ENCODE measurements at regions of chr9 and their contacts with region 1.

Region 1: GRCh38 chr9:137029058-137029936 is 1.3 kb upstream of the ABCA2 start:
- DNase-seq: peak; percentile 49 to 83 (median 70)
- ATAC-seq: peak; percentile 33
- H3K4me3 ChIP-seq: peak overlapping the region; percentile 69 to 70
- H3K4me3 Mint-ChIP-seq: peak overlapping the region; percentile 82
- H3K27ac ChIP-seq: peak overlapping the region; percentile 37 to 70
- H3K27ac Mint-ChIP-seq: peak overlapping the region; percentile 82
- H3K4me1 ChIP-seq: peaks cover 74% of the 10 kb centered on the region
- H3K4me1 Mint-ChIP-seq: peaks cover 45% of the 10 kb centered on the region
- H3K27me3 ChIP-seq: no peaks in the 10 kb centered on the region
- H3K27me3 Mint-ChIP-seq: no peaks in the 10 kb centered on the region
- CTCF ChIP-seq: peak; percentile 61

Region 2: GRCh38 chr9:136944519-136945279 is 84.6 kb before region 1 on chr9 and contains the starts of genes C8G and FBXW5:
- CTCF ChIA-PET with region 1: interaction called, 68 read pairs
- POLR2A ChIA-PET with region 1: interaction called, 5 read pairs
- intact Hi-C with region 1: loop called in 1 of 2 experiments (anchors 1 kb)
- DNase-seq: peak; percentile 87 to 98 (median 93)
- ATAC-seq: peak; percentile 87
- H3K4me3 ChIP-seq: peak within 1 kb of the TSS; percentile 63 to 79
- H3K4me3 Mint-ChIP-seq: peak within 1 kb of the TSS; percentile 82
- H3K27ac ChIP-seq: peak within 1 kb of the TSS; percentile 28 to 48
- H3K27ac Mint-ChIP-seq: peak within 1 kb of the TSS; percentile 62
- H3K4me1 ChIP-seq: peaks cover 16% of the 10 kb centered on the region
- H3K4me1 Mint-ChIP-seq: peaks cover 12% of the 10 kb centered on the region
- H3K27me3 ChIP-seq: no peaks in the 10 kb centered on the region
- H3K27me3 Mint-ChIP-seq: no peaks in the 10 kb centered on the region
- CTCF ChIP-seq: peak; percentile 96
- total RNA-seq, gene C8G: not detected
- total RNA-seq, gene FBXW5: 38.4 to 39.5 TPM

Region 3: DNA sequence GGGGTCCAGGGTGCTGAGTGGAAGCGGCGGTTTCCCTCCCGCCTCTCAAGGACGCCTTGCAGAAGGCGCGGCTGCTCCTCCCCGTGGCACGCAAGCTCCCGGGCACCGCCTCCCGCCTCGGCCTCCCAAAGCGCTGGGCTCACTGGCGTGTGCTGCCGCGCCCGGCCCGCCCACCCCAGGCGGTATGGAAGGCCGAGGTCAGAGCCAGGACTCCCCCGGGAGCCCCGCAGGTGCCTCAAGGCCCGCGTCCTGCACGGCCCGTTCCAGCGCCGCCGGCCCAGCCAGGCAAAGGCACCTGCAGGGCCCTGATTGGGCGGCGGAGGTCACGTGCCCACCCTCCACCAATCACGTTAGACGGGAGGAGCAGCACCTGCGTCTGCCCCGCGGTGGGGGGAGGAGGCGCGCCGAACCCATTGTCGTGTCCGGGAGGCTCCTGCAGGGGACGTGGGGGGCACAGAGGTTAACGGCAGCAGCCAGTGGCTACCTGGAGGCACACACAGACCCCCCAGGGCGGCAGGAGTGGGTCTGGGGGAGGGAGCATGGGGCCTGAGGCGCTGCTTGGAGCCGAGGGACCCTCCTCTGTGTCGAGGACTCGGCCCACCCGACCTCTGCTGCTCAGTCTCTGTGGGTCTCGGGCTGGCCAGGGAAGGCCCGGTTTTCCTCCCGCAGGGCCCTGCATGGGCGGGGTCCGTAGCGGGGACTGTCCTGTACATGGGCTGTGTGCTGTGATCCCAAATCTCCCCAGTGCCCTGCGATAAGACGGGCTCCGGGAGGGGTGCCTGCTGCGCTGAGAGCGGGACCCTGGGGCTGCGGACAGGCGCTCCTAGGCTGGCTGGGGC is 79.3 kb before region 1 on chr9:
- CTCF ChIA-PET with region 1: interaction called, 68 read pairs
- POLR2A ChIA-PET with region 1: interaction called, 5 read pairs
- intact Hi-C with region 1: loop called in 1 of 2 experiments (anchors 1 kb)
- DNase-seq: peak; percentile 93 to 98 (median 97)
- ATAC-seq: peak; percentile 96
- H3K4me3 ChIP-seq: peak overlapping the region; percentile 68 to 70
- H3K4me3 Mint-ChIP-seq: peak overlapping the region; percentile 85
- H3K27ac ChIP-seq: peak overlapping the region; percentile 65 to 75
- H3K27ac Mint-ChIP-seq: peak overlapping the region; percentile 90
- H3K4me1 ChIP-seq: peaks cover 11% of the 10 kb centered on the region
- H3K4me1 Mint-ChIP-seq: peaks cover 14% of the 10 kb centered on the region
- H3K27me3 ChIP-seq: no peaks in the 10 kb centered on the region
- H3K27me3 Mint-ChIP-seq: no peaks in the 10 kb centered on the region
- CTCF ChIP-seq: peak; percentile 51

Region 4: DNA sequence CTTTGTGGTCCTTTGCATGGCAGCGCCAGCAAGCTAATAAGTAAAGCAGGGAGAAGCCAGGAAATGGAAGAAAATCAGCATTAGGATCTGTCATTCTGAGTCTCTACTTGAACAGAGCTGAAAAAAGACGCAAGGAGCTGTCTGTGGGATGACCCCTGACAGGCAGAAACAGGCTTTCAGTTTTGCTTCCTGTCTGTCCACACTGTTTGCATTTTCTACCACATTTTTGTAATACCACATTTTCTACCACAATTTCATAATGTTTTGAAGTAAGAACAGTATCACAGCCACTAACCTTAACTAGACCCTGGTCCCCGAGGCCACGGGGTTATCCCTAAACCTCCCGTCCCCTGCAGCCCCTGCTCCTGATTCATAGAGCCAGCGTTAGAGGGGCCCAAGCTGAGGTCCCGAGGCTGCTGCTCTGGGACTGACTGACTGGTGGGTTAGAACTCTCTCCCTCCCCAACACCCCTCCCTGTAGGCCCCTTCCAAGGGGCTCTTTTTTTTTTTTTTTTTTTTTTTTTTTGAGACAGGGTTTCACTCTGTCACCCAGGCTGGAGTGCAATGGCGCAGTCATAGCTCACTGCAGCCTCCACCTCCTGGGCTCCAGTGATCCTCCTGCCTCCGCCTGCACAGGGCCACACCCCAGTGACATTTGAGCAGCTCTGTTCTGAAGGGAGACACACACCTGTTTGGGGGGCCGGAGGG is 29.0 kb before region 1 on chr9:
- CTCF ChIA-PET with region 1: interaction called, 30 read pairs
- POLR2A ChIA-PET with region 1: interaction called, 6 read pairs
- intact Hi-C with region 1: loop called in 1 of 2 experiments (anchors 2 kb)
- DNase-seq: peak in 2 of 9 experiments; percentile 65 to 80
- ATAC-seq: peak; percentile 32
- H3K4me3 ChIP-seq: peak overlapping the region in 1 of 2 experiments; percentile 18
- H3K4me3 Mint-ChIP-seq: peak overlapping the region; percentile 69
- H3K27ac ChIP-seq: peak overlapping the region; percentile 9 to 65
- H3K27ac Mint-ChIP-seq: peak overlapping the region; percentile 69
- H3K4me1 ChIP-seq: peaks cover 40% of the 10 kb centered on the region
- H3K4me1 Mint-ChIP-seq: peaks cover 39% of the 10 kb centered on the region
- H3K27me3 ChIP-seq: no peaks in the 10 kb centered on the region
- H3K27me3 Mint-ChIP-seq: no peaks in the 10 kb centered on the region
- CTCF ChIP-seq: no peak

Region 5: GRCh38 chr9:137046098-137046787 is 16.9 kb after region 1 on chr9 and contains the start of gene NPDC1:
- CTCF ChIA-PET with region 1: interaction called, 37 read pairs
- POLR2A ChIA-PET with region 1: interaction called, 5 read pairs
- intact Hi-C with region 1: no loop called
- DNase-seq: peak; percentile 64 to 87 (median 80)
- ATAC-seq: peak; percentile 87
- H3K4me3 ChIP-seq: peak within 1 kb of the TSS; percentile 28 to 45
- H3K4me3 Mint-ChIP-seq: peak within 1 kb of the TSS; percentile 68
- H3K27ac ChIP-seq: no peak within 1 kb of the TSS
- H3K27ac Mint-ChIP-seq: no peak within 1 kb of the TSS
- H3K4me1 ChIP-seq: peaks cover 29% of the 10 kb centered on the region
- H3K4me1 Mint-ChIP-seq: peaks cover 16% of the 10 kb centered on the region
- H3K27me3 ChIP-seq: peaks cover 44 to 67% of the 10 kb centered on the region in 2 experiments
- H3K27me3 Mint-ChIP-seq: peaks cover 26% of the 10 kb centered on the region
- CTCF ChIP-seq: peak; percentile 84
- total RNA-seq, gene NPDC1: 29.7 to 29.8 TPM

Region 6: GRCh38 chr9:137070201-137070905 is 41.1 kb after region 1 on chr9 and contains the start of gene SAPCD2:
- CTCF ChIA-PET with region 1: interaction called, 52 read pairs
- POLR2A ChIA-PET with region 1: no interaction called
- intact Hi-C with region 1: loop called in 1 of 2 experiments (anchors 5 kb)
- DNase-seq: peak; percentile 66 to 94 (median 82)
- ATAC-seq: peak; percentile 87
- H3K4me3 ChIP-seq: peak within 1 kb of the TSS; percentile 46 to 50
- H3K4me3 Mint-ChIP-seq: peak within 1 kb of the TSS; percentile 70
- H3K27ac ChIP-seq: peak within 1 kb of the TSS in 1 of 2 experiments; percentile 30
- H3K27ac Mint-ChIP-seq: no peak within 1 kb of the TSS
- H3K4me1 ChIP-seq: peaks cover 14% of the 10 kb centered on the region
- H3K4me1 Mint-ChIP-seq: peaks cover 14% of the 10 kb centered on the region
- H3K27me3 ChIP-seq: peaks cover 0 to 9% of the 10 kb centered on the region in 2 experiments
- H3K27me3 Mint-ChIP-seq: no peaks in the 10 kb centered on the region
- CTCF ChIP-seq: no peak
- total RNA-seq, gene SAPCD2: 0.38 to 0.47 TPM

Region 7: DNA sequence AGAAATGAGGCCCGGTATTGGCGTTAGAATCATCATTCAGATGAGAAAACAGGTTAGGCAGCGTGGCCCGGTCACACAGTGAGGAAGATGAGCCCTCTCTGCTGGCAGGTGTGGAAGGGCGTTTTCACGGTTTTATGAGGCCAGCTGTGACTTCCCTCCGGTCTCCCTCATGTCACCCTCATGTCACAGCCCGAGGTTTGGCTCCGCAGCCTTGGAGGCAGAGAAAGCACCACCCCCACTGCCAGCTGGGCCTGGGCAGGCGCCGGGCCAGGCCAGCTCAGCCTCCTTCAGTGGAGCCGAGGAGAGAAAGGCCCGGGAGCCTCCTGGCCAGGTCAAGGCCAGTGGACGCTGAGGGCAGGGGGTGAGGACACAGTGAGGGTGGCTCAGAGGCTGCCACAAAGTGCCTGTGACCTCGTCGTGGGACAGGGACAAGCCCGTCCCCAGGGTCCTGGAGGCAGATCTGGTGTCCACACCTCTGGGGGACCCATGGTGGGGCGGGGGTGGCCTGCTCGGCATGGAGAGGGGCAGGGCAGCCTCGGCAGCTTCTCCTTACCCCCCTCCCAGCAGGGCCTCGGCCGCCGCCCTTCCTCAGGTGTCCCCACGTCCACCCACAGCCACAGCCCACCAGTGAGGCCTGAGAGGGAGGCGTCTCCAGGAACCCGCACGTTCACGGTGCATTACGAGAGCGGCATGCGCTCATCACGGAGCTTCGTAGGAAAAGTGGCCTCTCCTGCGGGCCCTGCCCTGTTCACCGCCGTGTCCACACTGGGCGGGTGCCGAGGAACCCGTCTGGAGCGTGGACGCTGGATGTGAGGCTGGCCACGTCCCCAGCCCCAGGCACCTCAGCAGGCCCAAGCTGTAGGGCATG is 361.5 kb after region 1 on chr9:
- CTCF ChIA-PET with region 1: no interaction called
- POLR2A ChIA-PET with region 1: no interaction called
- intact Hi-C with region 1: no loop called
- DNase-seq: no peak
- ATAC-seq: no peak
- H3K4me3 ChIP-seq: no peak overlapping the region
- H3K4me3 Mint-ChIP-seq: no peak overlapping the region
- H3K27ac ChIP-seq: no peak overlapping the region
- H3K27ac Mint-ChIP-seq: no peak overlapping the region
- H3K4me1 ChIP-seq: peaks cover 15% of the 10 kb centered on the region
- H3K4me1 Mint-ChIP-seq: peaks cover 11% of the 10 kb centered on the region
- H3K27me3 ChIP-seq: no peaks in the 10 kb centered on the region
- H3K27me3 Mint-ChIP-seq: no peaks in the 10 kb centered on the region
- CTCF ChIP-seq: no peak

Measured in CD8-positive, alpha-beta T cell (primary cell).